Posterior vena cava (tissue), 2 donors: ENCODE measurements at regions of chr9 and their contacts with region 1.

Region 1: DNA sequence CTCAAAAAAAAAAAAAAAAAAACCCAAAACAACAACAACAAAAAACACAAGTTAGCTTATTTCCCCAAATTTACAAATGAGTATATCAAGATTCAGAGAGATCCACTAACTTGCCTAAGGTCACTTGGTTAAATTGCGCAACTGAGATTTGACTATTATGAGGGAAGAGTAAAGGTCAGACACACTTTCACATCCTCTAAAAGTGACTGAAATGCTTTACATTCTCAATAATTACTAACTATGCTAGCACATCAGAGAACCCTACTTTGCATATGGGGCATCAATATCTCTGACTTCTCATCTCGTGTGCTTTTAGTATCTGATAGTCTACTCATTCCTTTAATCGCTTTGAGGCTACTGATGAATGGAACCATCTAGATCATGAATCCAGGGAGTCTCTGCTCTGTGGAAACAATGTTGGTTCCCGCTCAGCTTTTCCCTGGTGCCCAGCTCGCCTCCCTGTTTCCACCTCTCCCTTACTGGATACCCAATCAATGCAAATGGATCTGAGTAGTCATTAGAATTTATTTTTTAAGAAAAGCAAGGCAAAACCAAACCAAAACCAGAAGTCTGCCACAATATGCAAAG is 182.1 kb upstream of the TRIM32 start:
- DNase-seq: no peak

Region 2: GRCh38 chr9:115923903-115924668 is 580.9 kb before region 1 on chr9:
- intact Hi-C with region 1: loop called in 1 of 2 experiments (anchors 10 kb)
- DNase-seq: no peak